Transverse colon (tissue), 4 donors: ENCODE measurements at regions of chr2 and their contacts with region 1.

Region 1: DNA sequence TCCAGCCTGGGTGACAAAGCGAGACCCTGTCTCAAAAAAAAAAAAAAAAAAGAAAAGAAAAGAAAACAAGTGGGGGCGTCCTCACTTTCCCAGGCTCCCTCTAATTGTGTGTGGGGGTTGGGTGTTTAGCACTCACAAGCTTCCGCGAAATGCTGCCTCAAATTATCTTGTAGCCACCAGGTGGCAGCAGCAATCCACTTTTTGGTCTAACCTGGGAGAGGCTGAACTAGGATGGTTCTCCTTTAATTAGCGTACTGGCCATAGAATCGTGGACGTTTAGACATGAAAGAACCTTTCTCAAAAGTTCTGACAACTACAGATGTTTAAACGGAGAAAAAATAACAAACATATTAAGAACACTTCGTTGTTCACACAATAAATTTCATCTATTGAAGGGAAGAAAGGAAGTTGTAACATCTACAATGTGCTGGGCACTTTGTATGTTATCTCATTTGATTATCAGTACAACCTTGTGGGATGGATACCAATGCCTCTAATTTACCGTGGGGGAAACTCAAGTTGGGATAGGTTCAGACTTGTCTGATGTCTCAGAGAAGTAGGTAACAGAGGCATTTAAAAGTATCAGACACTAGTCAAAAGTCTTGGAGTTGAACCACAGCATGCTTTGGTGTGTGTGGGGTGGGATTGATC is 122.7 kb upstream of the NABP1 start:
- DNase-seq: peak; percentile 88
- H3K4me3 ChIP-seq: no peak overlapping the region
- H3K27ac ChIP-seq: no peak overlapping the region
- H3K4me1 ChIP-seq: peaks cover 0 to 3% (median 0%) of the 10 kb centered on the region in 4 donors
- H3K27me3 ChIP-seq: no peaks in the 10 kb centered on the region
- CTCF ChIP-seq: peak; percentile 68 to 78 (median 73)
- EP300 ChIP-seq: no peak
- POLR2A ChIP-seq: no peak

Region 2: DNA sequence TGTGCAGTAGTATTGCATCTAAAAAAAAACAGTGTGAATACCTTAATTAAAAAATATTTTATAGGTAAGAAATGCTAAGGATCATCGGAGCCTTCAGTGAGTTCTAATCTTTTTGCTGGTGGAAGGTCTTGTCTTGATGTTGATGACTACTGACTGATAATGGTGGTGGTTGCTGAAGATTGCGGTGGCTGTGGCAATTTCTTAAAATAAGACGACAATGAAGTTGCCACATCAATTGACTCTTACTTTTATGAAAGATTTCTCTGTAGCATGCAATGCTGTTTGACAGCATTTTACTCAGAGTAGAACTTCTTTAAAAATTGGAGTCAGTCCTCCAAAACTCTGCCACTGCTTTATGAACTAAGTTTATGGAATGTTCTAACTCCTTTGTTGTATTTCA is 638.4 kb before region 1 on chr2:
- in situ Hi-C with region 1: no loop called
- intact Hi-C with region 1: no loop called
- DNase-seq: no peak
- H3K4me3 ChIP-seq: no peak overlapping the region
- H3K27ac ChIP-seq: no peak overlapping the region
- H3K4me1 ChIP-seq: peaks cover 0 to 7% (median 0%) of the 10 kb centered on the region in 4 donors
- H3K27me3 ChIP-seq: no peaks in the 10 kb centered on the region
- CTCF ChIP-seq: no peak
- EP300 ChIP-seq: no peak
- POLR2A ChIP-seq: no peak

Region 3: GRCh38 chr2:191691016-191691735 is 136.0 kb after region 1 on chr2:
- in situ Hi-C with region 1: loop called in 1 of 4 experiments (anchors 10 kb)
- intact Hi-C with region 1: loop called (anchors 5 kb)
- DNase-seq: peak; percentile 59
- H3K4me3 ChIP-seq: no peak overlapping the region
- H3K27ac ChIP-seq: no peak overlapping the region
- H3K4me1 ChIP-seq: peaks cover 0 to 23% (median 15%) of the 10 kb centered on the region in 4 donors
- H3K27me3 ChIP-seq: peaks cover 5% of the 10 kb centered on the region
- CTCF ChIP-seq: peak; percentile 66 to 82 (median 69)
- EP300 ChIP-seq: no peak
- POLR2A ChIP-seq: no peak

Region 4: GRCh38 chr2:191806396-191806795 is 251.2 kb after region 1 on chr2:
- in situ Hi-C with region 1: no loop called
- intact Hi-C with region 1: loop called (anchors 5 kb)
- DNase-seq: no peak
- H3K4me3 ChIP-seq: no peak overlapping the region
- H3K27ac ChIP-seq: no peak overlapping the region
- H3K4me1 ChIP-seq: no peaks in the 10 kb centered on the region
- H3K27me3 ChIP-seq: no peaks in the 10 kb centered on the region
- CTCF ChIP-seq: no peak
- EP300 ChIP-seq: no peak
- POLR2A ChIP-seq: no peak